B cell (primary cell): ENCODE measurements at regions of chr17 and their contacts with region 1.

Region 1: DNA sequence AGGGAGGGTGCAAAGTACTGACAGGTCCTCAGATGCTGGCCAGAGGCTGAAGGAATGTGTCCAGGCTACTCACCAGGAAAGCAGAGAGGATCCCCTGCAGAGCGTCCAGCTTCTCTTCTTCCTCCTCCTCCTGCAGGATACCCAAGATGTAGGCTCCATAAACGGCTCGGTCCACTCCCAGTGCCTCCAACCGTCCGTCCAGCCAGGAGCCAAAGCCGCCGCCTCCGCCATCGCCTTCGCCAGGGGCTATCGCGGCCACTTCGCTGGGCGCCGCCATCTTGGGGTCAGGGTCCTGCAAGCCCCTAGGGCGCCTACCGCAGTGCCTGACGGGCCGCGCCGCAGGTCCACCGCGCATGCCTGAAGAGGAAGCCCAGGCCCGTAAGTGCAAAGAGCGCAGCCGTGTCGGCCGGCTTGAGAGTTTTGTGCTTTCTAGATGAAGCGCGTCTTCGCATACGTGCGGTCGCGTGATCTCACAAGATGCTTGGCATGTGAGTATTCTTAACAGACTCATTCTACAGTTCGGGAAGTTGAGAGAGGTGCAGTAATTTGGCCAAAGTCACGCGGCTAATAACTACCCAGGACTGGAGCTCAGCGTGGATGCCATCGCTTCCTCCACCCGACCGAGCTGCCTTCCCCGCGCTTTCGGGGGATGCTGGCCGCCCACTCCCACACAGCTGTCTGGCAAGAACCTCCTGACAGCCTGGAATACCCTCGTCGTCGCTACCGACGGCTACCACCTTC is at the start of gene CCDC43:
- DNase-seq: peak; percentile 95
- ATAC-seq: peak; percentile 100
- H3K4me3 ChIP-seq: peak within 1 kb of the TSS; percentile 87 to 98 (median 94)
- H3K4me3 Mint-ChIP-seq: peak within 1 kb of the TSS; percentile 99
- H3K27ac ChIP-seq: peak within 1 kb of the TSS; percentile 83 to 92
- H3K27ac Mint-ChIP-seq: peak within 1 kb of the TSS; percentile 94
- H3K4me1 ChIP-seq: peaks cover 12 to 18% of the 10 kb centered on the region in 2 donors
- H3K4me1 Mint-ChIP-seq: peaks cover 23% of the 10 kb centered on the region
- H3K27me3 ChIP-seq: no peaks in the 10 kb centered on the region
- H3K27me3 Mint-ChIP-seq: no peaks in the 10 kb centered on the region
- CTCF ChIP-seq: no peak
- total RNA-seq, gene CCDC43: 21.9 and 22.7 TPM in 2 replicates

Region 2: DNA sequence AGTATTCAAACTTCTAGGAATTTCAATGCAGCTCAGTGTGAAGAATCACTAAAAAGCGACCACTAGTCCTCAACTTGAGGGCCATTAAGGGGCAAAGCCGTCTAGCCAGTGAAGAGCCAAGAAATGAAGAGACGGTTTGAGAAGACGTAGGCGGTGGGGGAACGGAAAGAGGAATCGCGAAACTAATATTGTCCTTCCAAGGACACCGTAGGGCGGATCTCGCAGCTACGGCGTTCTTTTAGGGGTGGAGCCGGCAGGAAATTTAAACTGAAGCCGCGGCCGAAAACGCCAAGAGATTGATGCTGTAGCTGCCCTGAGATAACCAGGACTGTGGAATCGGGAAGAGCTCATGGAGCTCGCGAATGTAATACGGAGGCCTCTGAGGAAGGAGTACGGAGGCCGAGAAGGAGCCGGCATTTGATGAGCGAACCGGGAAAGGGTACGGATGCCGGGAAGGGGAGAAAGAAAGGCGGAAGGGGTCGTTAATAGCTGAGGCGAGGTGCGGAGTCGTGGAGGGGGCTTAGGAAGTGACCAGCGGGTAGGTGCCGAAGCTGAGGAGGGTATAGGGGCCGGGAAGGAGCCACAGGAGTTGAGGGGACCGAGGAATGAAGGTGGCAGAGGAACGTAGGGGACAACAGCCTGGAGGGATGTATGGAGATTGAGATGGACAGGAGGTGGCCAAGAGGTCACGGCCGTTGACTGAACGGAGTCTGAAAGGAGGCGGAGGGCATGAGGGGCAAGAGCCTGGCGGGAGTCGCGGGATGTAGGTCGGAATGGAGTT is 18.9 kb after region 1 on chr17 and contains the start of gene DBF4B:
- CTCF ChIA-PET with region 1: interaction called, 6 read pairs
- POLR2A ChIA-PET with region 1: interaction called, 7 read pairs
- intact Hi-C with region 1: loop called (anchors 1 kb)
- DNase-seq: peak; percentile 94
- ATAC-seq: peak; percentile 96
- H3K4me3 ChIP-seq: peak within 1 kb of the TSS; percentile 85 to 99 (median 90)
- H3K4me3 Mint-ChIP-seq: no peak within 1 kb of the TSS
- H3K27ac ChIP-seq: peak within 1 kb of the TSS; percentile 35 to 68
- H3K27ac Mint-ChIP-seq: peak within 1 kb of the TSS; percentile 32
- H3K4me1 ChIP-seq: peaks cover 13 to 17% of the 10 kb centered on the region in 2 donors
- H3K4me1 Mint-ChIP-seq: peaks cover 4% of the 10 kb centered on the region
- H3K27me3 ChIP-seq: peaks cover 0 to 2% (median 0%) of the 10 kb centered on the region in 4 experiments
- H3K27me3 Mint-ChIP-seq: peaks cover 4% of the 10 kb centered on the region
- CTCF ChIP-seq: no peak
- total RNA-seq, gene DBF4B: 13.8 and 15.9 TPM in 2 replicates